ENCODE measurements at regions of chr1 and their contacts with region 1.

Region 1: GRCh38 chr1:31789259-31790065 is 25.3 kb upstream of the ADGRB2 start:
- DNase-seq: peak; percentile 92 to 98 (median 96)
- ATAC-seq: peak; percentile 81
- H3K4me3 ChIP-seq: peak overlapping the region; percentile 68 to 71
- H3K4me3 Mint-ChIP-seq: peak overlapping the region; percentile 91
- H3K27ac ChIP-seq: no peak overlapping the region
- H3K27ac Mint-ChIP-seq: no peak overlapping the region
- H3K4me1 ChIP-seq: peaks cover 11% of the 10 kb centered on the region
- H3K4me1 Mint-ChIP-seq: peaks cover 15% of the 10 kb centered on the region
- H3K27me3 ChIP-seq: no peaks in the 10 kb centered on the region
- H3K27me3 Mint-ChIP-seq: no peaks in the 10 kb centered on the region
- CTCF ChIP-seq: peak; percentile 67

Region 2: GRCh38 chr1:30877205-30877912 is 912.1 kb before region 1 on chr1:
- CTCF ChIA-PET with region 1: no interaction called
- POLR2A ChIA-PET with region 1: no interaction called
- intact Hi-C with region 1: no loop called
- DNase-seq: no peak
- ATAC-seq: no peak
- H3K4me3 ChIP-seq: no peak overlapping the region
- H3K4me3 Mint-ChIP-seq: no peak overlapping the region
- H3K27ac ChIP-seq: no peak overlapping the region
- H3K27ac Mint-ChIP-seq: no peak overlapping the region
- H3K4me1 ChIP-seq: no peaks in the 10 kb centered on the region
- H3K4me1 Mint-ChIP-seq: peaks cover 2% of the 10 kb centered on the region
- H3K27me3 ChIP-seq: peaks cover 0 to 10% of the 10 kb centered on the region in 2 experiments
- H3K27me3 Mint-ChIP-seq: peaks cover 32% of the 10 kb centered on the region
- CTCF ChIP-seq: no peak

Region 3: DNA sequence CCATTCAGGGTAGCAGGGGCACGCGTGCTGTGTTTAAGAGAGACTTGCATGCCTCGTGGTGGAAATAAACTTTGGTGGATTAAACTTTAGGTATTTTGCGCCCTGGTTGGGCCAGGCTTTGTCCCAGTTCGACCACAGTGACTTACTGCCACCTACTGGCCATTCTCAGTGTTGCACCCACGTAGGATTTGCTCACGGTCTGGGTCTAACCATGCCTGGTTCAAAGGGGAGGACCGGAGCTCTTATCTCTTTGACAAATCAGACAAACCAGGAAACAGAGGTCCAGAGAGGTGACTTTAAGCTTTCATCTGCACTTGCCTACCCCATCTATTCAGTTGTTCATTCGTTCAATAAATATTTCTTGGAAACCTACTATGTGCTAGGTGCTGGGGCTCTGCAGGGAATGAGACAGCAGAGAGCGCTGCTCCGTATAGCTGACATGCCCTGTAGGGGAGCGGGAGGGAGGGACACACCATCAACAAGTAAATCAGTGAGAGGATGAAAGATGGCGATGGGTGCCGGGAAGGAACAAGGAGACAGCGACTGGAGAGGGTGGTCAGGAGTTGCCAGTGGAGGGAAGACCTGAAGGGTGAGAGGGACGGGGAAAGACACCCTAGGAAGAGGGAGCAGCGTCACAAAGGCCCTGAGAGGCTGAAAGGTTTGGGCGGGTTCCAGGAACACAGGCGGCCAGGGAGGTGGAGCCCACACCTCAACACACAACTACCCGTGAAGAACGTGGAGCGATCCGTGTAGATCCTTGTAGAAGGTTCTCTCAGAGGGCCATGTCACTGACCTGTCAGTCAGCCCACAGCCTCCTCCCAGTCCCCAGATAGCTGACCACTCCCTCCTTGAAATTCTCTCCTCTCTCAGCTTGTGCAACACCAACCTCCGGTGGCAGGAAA is 240.3 kb before region 1 on chr1:
- CTCF ChIA-PET with region 1: interaction called, 7 read pairs
- POLR2A ChIA-PET with region 1: no interaction called
- intact Hi-C with region 1: loop called (anchors 5 kb)
- DNase-seq: peak; percentile 77 to 93 (median 84)
- ATAC-seq: peak; percentile 100
- H3K4me3 ChIP-seq: peak overlapping the region in 1 of 2 experiments; percentile 12
- H3K4me3 Mint-ChIP-seq: peak overlapping the region; percentile 30
- H3K27ac ChIP-seq: no peak overlapping the region
- H3K27ac Mint-ChIP-seq: no peak overlapping the region
- H3K4me1 ChIP-seq: peaks cover 4% of the 10 kb centered on the region
- H3K4me1 Mint-ChIP-seq: peaks cover 10% of the 10 kb centered on the region
- H3K27me3 ChIP-seq: peaks cover 0 to 2% of the 10 kb centered on the region in 2 experiments
- H3K27me3 Mint-ChIP-seq: peaks cover 9% of the 10 kb centered on the region
- CTCF ChIP-seq: peak; percentile 91

Region 4: GRCh38 chr1:31663622-31664452 is 125.6 kb before region 1 on chr1:
- CTCF ChIA-PET with region 1: interaction called, 150 read pairs
- POLR2A ChIA-PET with region 1: interaction called, 5 read pairs
- intact Hi-C with region 1: loop called in 1 of 2 experiments (anchors 1 kb)
- DNase-seq: peak; percentile 18 to 79 (median 59)
- ATAC-seq: peak; percentile 72
- H3K4me3 ChIP-seq: no peak overlapping the region
- H3K4me3 Mint-ChIP-seq: no peak overlapping the region
- H3K27ac ChIP-seq: no peak overlapping the region
- H3K27ac Mint-ChIP-seq: no peak overlapping the region
- H3K4me1 ChIP-seq: no peaks in the 10 kb centered on the region
- H3K4me1 Mint-ChIP-seq: no peaks in the 10 kb centered on the region
- H3K27me3 ChIP-seq: no peaks in the 10 kb centered on the region
- H3K27me3 Mint-ChIP-seq: peaks cover 3% of the 10 kb centered on the region
- CTCF ChIP-seq: peak; percentile 70

Region 5: DNA sequence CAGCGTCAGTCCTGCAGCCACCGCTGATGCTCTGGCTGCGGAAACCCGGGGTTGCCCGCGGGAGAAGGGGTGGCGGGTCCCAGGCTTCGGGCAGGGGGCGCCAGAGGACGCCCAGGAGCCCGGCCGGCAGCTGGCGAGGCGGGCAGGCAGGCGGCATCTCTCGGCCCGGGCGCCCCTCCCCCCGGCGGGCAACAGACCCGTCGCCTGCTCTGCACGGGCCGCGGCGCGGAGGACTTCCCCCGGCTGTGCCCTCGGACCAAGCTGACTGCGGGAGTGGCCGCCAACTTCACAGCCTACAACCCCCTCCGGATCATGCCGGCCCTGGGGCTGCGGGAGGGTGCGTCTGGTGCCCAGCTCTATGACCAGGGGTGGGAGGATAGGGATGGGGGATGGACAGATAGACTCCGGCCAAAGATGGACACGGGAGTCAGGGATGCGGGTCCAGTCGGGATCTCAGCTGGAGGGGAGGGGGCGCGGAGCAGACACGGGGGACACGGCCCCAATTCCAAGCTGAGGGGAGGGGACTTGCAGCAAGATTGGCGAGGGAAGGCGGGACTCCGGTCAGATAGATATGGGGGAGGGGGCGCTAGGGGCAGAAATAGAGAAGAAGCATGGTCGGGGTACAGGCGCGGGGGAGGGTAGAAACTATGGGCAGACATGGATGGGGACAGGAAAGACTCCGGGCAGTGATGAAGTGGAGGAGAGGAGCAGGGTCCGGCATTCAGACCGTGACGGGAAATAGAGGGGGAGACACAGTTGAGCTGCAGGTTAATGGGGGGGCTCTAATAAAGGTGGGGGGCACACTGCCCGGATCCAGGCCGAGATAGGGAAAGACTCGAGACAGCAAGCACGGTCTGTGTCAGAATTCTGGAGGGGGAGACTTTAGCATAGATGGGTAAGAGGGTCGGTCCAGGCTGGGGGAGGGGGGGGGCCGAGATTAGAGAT is 26.5 kb before region 1 on chr1:
- CTCF ChIA-PET with region 1: interaction called, 65 read pairs
- POLR2A ChIA-PET with region 1: interaction called, 11 read pairs
- intact Hi-C with region 1: loop called (anchors 1 kb)
- DNase-seq: peak; percentile 39 to 86 (median 69)
- ATAC-seq: peak; percentile 43
- H3K4me3 ChIP-seq: peak overlapping the region; percentile 41 to 57
- H3K4me3 Mint-ChIP-seq: peak overlapping the region; percentile 80
- H3K27ac ChIP-seq: no peak overlapping the region
- H3K27ac Mint-ChIP-seq: no peak overlapping the region
- H3K4me1 ChIP-seq: peaks cover 40% of the 10 kb centered on the region
- H3K4me1 Mint-ChIP-seq: peaks cover 29% of the 10 kb centered on the region
- H3K27me3 ChIP-seq: peaks cover 11 to 14% of the 10 kb centered on the region in 2 experiments
- H3K27me3 Mint-ChIP-seq: peaks cover 11% of the 10 kb centered on the region
- CTCF ChIP-seq: peak; percentile 45

Region 6: DNA sequence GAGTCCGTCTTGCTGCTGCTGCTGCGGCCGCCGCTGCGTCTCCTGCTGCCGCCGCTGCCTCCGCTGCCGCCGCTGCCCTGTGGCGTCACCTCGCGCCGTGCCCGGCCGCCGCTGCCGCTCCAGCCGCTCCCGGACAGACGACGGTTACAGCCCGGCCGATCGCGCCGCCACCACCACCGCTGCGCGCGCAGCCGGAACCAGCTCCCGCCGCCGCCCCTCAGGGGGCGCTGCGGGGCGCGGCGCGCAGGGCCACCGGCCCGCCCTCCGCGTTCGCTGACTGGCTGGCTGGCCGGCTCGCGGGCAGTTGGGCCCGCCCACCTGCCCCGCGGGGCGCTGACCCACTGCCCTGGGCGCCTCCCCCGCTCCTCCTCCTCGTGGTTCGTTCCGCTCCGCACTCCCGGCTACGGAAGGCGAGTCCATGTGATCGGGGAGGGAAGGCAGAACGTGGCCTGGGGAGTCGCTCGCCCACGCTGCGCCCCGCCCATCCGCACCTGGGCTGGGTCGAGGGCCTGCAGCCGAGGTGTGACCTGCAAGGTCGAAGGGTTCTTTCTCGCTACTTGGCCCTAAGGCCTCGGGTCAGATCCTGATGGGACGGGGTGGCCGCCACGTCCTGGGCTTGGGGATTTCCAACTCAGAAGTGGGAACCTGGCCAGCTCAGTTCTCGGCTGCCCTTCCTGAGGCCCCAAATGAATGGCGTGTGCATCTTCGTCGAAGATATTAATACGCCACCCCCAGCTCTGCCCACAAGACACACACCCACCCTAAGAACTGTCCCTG is 148.9 kb after region 1 on chr1 and contains the start of gene PTP4A2:
- CTCF ChIA-PET with region 1: interaction called, 17 read pairs
- POLR2A ChIA-PET with region 1: no interaction called
- intact Hi-C with region 1: no loop called
- DNase-seq: peak; percentile 54 to 91 (median 79)
- ATAC-seq: peak; percentile 60
- H3K4me3 ChIP-seq: peak within 1 kb of the TSS; percentile 68 to 93
- H3K4me3 Mint-ChIP-seq: peak within 1 kb of the TSS; percentile 100
- H3K27ac ChIP-seq: peak within 1 kb of the TSS; percentile 57 to 85
- H3K27ac Mint-ChIP-seq: peak within 1 kb of the TSS; percentile 99
- H3K4me1 ChIP-seq: peaks cover 77% of the 10 kb centered on the region
- H3K4me1 Mint-ChIP-seq: peaks cover 70% of the 10 kb centered on the region
- H3K27me3 ChIP-seq: no peaks in the 10 kb centered on the region
- H3K27me3 Mint-ChIP-seq: no peaks in the 10 kb centered on the region
- CTCF ChIP-seq: peak; percentile 43
- total RNA-seq, gene PTP4A2: 257 to 278 TPM

Region 7: GRCh38 chr1:31984419-31985347 is 195.2 kb after region 1 on chr1:
- CTCF ChIA-PET with region 1: no interaction called
- POLR2A ChIA-PET with region 1: no interaction called
- intact Hi-C with region 1: no loop called
- DNase-seq: peak in 8 of 9 experiments; percentile 16 to 66 (median 46)
- ATAC-seq: peak; percentile 69
- H3K4me3 ChIP-seq: no peak overlapping the region
- H3K4me3 Mint-ChIP-seq: peak overlapping the region; percentile 48
- H3K27ac ChIP-seq: peak overlapping the region in 1 of 2 experiments; percentile 80
- H3K27ac Mint-ChIP-seq: peak overlapping the region; percentile 92
- H3K4me1 ChIP-seq: peaks cover 52% of the 10 kb centered on the region
- H3K4me1 Mint-ChIP-seq: peaks cover 56% of the 10 kb centered on the region
- H3K27me3 ChIP-seq: no peaks in the 10 kb centered on the region
- H3K27me3 Mint-ChIP-seq: no peaks in the 10 kb centered on the region
- CTCF ChIP-seq: no peak

Region 8: DNA sequence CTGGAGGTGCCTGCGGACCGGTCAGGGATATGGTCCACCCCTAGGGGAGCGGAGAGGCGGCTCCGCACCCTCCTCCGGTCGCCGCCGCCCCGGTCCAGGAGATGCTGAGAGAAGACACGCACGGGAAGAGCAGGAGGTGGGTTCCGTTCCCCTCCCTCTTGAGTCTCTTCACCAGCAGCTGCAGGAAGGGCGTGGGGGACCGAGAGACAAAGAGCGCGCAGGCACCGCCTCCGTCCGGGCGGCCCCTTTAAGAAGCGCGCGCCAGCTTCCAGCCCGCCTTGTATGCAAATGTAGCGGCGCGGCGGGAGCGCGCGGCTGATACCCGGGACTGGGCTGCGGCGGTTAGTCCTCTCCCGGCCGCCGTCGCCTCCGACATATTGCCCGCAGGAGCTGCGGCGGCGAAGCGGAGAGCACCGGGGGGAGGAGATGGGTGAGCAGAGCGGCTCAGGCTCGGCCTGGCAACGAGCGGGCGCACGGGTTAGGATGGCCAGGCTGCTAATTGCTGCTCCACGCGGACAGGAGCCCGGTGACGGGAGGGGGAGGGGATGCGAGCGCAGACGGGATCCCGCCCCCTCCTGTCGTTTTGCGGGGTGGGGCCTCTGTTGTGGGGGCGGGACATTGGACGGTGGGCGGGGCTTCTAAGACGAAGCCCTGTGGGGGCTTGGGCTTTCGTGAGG is 283.3 kb after region 1 on chr1 and contains the start of gene TMEM39B:
- CTCF ChIA-PET with region 1: no interaction called
- POLR2A ChIA-PET with region 1: interaction called, 4 read pairs
- intact Hi-C with region 1: loop called in 1 of 2 experiments (anchors 2 kb)
- DNase-seq: peak; percentile 85 to 97 (median 92)
- ATAC-seq: peak; percentile 86
- H3K4me3 ChIP-seq: peak within 1 kb of the TSS; percentile 75 to 99
- H3K4me3 Mint-ChIP-seq: peak within 1 kb of the TSS; percentile 82
- H3K27ac ChIP-seq: peak within 1 kb of the TSS; percentile 65 to 74
- H3K27ac Mint-ChIP-seq: peak within 1 kb of the TSS; percentile 86
- H3K4me1 ChIP-seq: peaks cover 18% of the 10 kb centered on the region
- H3K4me1 Mint-ChIP-seq: peaks cover 32% of the 10 kb centered on the region
- H3K27me3 ChIP-seq: no peaks in the 10 kb centered on the region
- H3K27me3 Mint-ChIP-seq: no peaks in the 10 kb centered on the region
- CTCF ChIP-seq: no peak
- total RNA-seq, gene TMEM39B: 6.6 to 7.6 TPM